ENCODE measurements at regions of chr9 and their contacts with region 1.

Region 1: GRCh38 chr9:91150998-91151717 is 210.6 kb downstream of the AUH start:
- DNase-seq: peak; percentile 66
- ATAC-seq: peak; percentile 65
- H3K4me3 Mint-ChIP-seq: peak overlapping the region; percentile 13
- H3K27ac Mint-ChIP-seq: peak overlapping the region; percentile 95
- H3K4me1 Mint-ChIP-seq: peaks cover 79% of the 10 kb centered on the region
- H3K27me3 Mint-ChIP-seq: no peaks in the 10 kb centered on the region

Region 2: GRCh38 chr9:89375191-89375760 is 1775.9 kb before region 1 on chr9:
- CTCF ChIA-PET with region 1: no interaction called
- POLR2A ChIA-PET with region 1: no interaction called
- intact Hi-C with region 1: no loop called
- DNase-seq: no peak
- ATAC-seq: peak; percentile 33
- H3K4me3 Mint-ChIP-seq: no peak overlapping the region
- H3K27ac Mint-ChIP-seq: peak overlapping the region; percentile 78
- H3K4me1 Mint-ChIP-seq: peaks cover 25% of the 10 kb centered on the region
- H3K27me3 Mint-ChIP-seq: no peaks in the 10 kb centered on the region

Region 3: DNA sequence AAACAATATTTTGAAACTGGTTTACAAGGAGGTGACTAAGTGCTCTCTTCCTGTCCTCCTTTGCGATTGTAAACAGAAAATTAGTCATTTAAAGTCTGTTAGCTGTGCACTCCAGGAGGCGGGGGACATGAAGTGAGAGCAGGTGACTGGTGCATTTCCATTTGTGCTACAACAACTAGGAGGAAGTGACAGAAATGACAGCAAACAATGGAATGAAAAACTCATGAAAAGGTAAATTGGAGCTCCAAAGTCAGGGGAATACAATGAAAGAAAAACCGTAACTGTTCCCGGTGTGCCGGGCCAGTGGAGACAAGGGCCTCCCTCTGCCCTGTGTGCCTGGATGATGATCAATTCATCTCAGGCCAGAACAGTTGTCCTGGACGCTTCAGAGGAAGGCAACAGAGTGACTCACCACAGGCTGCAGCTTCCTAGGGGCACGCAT is 1106.4 kb before region 1 on chr9:
- CTCF ChIA-PET with region 1: no interaction called
- POLR2A ChIA-PET with region 1: no interaction called
- intact Hi-C with region 1: no loop called
- DNase-seq: peak; percentile 56
- ATAC-seq: peak; percentile 93
- H3K4me3 Mint-ChIP-seq: no peak overlapping the region
- H3K27ac Mint-ChIP-seq: no peak overlapping the region
- H3K4me1 Mint-ChIP-seq: peaks cover 12% of the 10 kb centered on the region
- H3K27me3 Mint-ChIP-seq: no peaks in the 10 kb centered on the region

Region 4: DNA sequence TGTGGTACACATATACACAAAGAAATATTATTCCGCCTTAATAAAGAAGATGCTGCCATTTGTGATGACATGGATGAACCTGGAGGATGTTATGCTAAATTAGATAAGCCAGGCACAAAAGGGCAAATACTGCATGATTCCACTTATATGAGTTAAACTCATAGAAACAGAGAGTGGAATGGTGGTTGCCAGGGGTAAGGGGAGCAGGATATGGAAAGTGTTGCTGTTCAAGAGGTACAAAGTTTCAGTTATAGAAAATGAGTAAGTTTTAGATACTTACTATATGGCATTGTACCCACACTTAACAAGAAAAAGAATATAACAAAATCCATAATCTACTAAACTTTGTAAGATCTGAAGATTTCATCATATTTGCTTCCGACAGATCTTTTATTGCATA is 97.3 kb before region 1 on chr9:
- CTCF ChIA-PET with region 1: interaction called, 3 read pairs
- POLR2A ChIA-PET with region 1: interaction called, 4 read pairs
- intact Hi-C with region 1: loop called in 1 of 2 experiments (anchors 1 kb)
- DNase-seq: peak; percentile 59
- ATAC-seq: peak; percentile 88
- H3K4me3 Mint-ChIP-seq: no peak overlapping the region
- H3K27ac Mint-ChIP-seq: peak overlapping the region; percentile 86
- H3K4me1 Mint-ChIP-seq: peaks cover 77% of the 10 kb centered on the region
- H3K27me3 Mint-ChIP-seq: peaks cover 3% of the 10 kb centered on the region

Region 5: DNA sequence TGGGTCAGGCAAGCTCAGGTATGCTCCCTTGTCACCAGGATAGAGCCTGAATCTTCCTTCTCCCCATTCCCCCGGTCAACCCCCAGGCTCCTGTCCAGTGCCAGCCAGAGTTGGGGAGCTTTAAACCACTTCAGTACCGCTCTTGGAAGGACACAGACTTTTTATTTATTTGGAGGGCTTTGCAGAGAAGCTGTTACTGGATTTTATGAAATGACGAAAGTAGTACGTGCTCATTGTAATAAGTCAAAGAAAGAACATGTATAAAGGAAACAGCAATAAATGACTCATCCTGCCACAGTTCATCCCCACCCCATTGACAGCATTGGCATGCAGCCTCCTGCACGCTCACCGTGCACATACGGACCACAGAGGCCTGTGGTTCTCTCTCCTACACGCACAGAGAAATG is 19.7 kb before region 1 on chr9:
- CTCF ChIA-PET with region 1: interaction called, 10 read pairs
- POLR2A ChIA-PET with region 1: interaction called, 29 read pairs
- intact Hi-C with region 1: loop called (anchors 1 kb)
- DNase-seq: peak; percentile 91
- ATAC-seq: peak; percentile 98
- H3K4me3 Mint-ChIP-seq: peak overlapping the region; percentile 3
- H3K27ac Mint-ChIP-seq: peak overlapping the region; percentile 94
- H3K4me1 Mint-ChIP-seq: peaks cover 29% of the 10 kb centered on the region
- H3K27me3 Mint-ChIP-seq: no peaks in the 10 kb centered on the region

Region 6: GRCh38 chr9:91199739-91200497 is 48.8 kb after region 1 on chr9:
- CTCF ChIA-PET with region 1: interaction called, 10 read pairs
- POLR2A ChIA-PET with region 1: interaction called, 4 read pairs
- intact Hi-C with region 1: no loop called
- DNase-seq: no peak
- ATAC-seq: no peak
- H3K4me3 Mint-ChIP-seq: no peak overlapping the region
- H3K27ac Mint-ChIP-seq: peak overlapping the region; percentile 78
- H3K4me1 Mint-ChIP-seq: peaks cover 72% of the 10 kb centered on the region
- H3K27me3 Mint-ChIP-seq: no peaks in the 10 kb centered on the region

Region 7: GRCh38 chr9:91221332-91221731 is 70.2 kb after region 1 on chr9:
- CTCF ChIA-PET with region 1: no interaction called
- POLR2A ChIA-PET with region 1: no interaction called
- intact Hi-C with region 1: no loop called
- DNase-seq: no peak
- ATAC-seq: no peak
- H3K4me3 Mint-ChIP-seq: no peak overlapping the region
- H3K27ac Mint-ChIP-seq: no peak overlapping the region
- H3K4me1 Mint-ChIP-seq: peaks cover 39% of the 10 kb centered on the region
- H3K27me3 Mint-ChIP-seq: no peaks in the 10 kb centered on the region

Region 8: DNA sequence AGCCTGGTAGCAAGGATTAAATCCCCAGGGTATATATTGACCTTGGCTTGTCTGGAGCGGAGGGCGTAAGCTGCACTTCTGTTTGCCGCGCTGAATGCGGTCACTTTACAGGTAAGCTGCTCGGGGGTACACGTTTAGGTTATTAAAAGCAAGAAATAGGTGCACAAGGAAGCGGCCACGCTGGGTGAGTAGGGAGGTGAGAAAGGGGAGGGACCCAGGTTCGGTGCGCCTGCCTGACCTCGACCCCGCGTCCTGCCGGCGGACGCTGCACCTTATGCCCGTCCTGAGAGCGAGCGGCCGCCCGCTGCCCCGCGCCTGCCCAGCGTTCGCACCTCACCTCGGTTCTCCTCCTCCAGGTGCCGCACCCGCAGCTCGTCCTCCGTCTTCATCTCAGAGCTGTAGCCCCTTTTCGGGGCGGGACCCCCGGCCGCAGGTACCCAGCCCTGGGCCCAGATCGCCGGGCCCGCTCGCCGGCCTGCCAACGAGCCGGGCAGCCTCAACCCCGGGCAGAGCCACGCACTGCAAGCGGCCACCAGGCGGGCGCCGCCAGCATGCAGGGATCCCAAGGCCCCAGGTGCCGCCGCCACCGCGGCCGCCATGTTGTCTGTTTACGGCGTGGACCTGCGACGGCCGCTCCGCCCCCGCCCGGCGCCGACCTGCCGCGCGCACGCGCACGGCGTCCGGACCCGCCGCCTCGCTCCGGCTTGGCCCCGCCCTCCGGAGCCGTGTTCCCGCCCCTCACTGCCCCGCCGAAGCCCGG is 210.3 kb after region 1 on chr9 and contains the start of gene AUH:
- CTCF ChIA-PET with region 1: interaction called, 4 read pairs
- POLR2A ChIA-PET with region 1: interaction called, 22 read pairs
- intact Hi-C with region 1: loop called (anchors 1 to 2 kb)
- DNase-seq: peak; percentile 93
- ATAC-seq: peak; percentile 74
- H3K4me3 Mint-ChIP-seq: peak within 1 kb of the TSS; percentile 87
- H3K27ac Mint-ChIP-seq: peak within 1 kb of the TSS; percentile 86
- H3K4me1 Mint-ChIP-seq: peaks cover 53% of the 10 kb centered on the region
- H3K27me3 Mint-ChIP-seq: no peaks in the 10 kb centered on the region
- total RNA-seq, gene AUH: 30.4 to 30.8 TPM

Measured in activated CD4-positive, alpha-beta T cell treated with anti-CD3 and anti-CD28 coated beads for 36 hours (primary cell).